SK-N-SH (cell line): ENCODE measurements at regions of chr2 and their contacts with region 1.

Region 1: DNA sequence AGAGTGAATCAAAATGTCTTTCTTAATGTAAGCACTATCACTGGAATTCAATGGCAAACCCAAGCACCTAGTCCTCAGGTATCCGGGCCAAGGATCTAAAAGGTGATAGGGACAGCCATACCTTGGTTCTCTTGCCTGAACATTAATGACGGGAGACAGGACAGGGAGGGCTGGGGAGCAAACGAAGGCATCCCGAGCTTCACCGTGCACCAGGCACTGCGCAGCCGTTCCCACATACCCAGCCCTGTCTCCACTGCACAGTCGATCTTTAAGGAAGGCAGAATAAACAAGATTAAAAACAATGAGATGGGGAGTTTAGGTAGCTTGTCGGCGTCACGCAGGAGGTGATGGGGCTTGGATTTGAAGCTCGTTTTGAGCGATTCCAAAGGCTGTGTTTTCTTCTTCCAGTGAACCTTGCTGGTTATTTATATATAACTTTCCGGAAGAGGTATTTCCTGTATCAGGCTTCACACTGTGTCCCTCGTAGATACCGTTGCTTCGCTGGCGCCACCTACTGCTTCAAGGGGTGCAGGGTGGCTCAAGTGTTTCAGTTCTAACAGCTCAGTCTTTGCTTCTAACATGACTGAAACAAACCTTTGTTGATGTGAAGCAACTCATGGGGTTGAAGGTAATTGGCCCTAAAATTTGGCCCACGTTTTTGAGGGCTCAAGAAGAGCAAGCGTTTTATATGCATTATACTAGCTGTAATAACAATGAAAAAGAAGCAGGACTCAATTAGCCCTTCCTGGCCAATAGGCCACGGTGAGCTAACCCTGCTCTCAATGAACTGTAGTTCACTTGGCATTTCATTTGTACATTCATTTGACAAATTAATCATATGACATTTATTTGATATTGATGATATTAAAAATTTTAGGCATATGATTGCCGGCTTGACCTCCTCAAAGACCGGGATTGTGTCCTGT is 77.4 kb downstream of the DCDC2C start:
- DNase-seq: peak; percentile 87
- H3K4me3 ChIP-seq: peak overlapping the region in 1 of 2 experiments; percentile 46; a peak in 2 of 4 replicates
- H3K27ac ChIP-seq: no peak overlapping the region
- H3K4me1 ChIP-seq: peaks cover 0 to 3% of the 10 kb centered on the region in 2 experiments; a peak in 2 of 4 replicates
- H3K27me3 ChIP-seq: no peaks in the 10 kb centered on the region
- CTCF ChIP-seq: peak; percentile 39
- EP300 ChIP-seq: no peak
- RAD21 ChIP-seq: peak; percentile 74

Region 2: DNA sequence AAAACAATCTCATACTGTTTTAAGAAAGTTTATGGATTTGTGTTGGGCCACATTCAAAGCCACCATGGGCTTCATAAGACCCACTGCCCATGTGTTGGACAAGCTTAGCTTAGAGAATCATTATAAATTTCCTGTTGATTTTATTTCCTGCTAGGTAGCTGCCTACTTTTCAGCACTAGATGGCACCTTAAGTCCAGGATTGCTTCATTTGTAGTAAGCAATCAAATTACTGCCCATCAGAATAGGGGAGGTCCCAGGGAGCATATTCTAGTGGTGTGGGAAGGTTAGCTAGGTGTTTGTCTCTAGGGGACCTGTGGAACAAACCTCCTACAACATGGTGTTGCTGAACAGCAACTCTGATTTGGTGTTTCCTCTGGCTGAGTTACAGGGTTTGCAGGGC is 88.4 kb before region 1 on chr2:
- CTCF ChIA-PET with region 1: interaction called, 24 read pairs
- POLR2A ChIA-PET with region 1: no interaction called
- DNase-seq: peak; percentile 68
- H3K4me3 ChIP-seq: no peak overlapping the region
- H3K27ac ChIP-seq: no peak overlapping the region
- H3K4me1 ChIP-seq: no peaks in the 10 kb centered on the region
- H3K27me3 ChIP-seq: no peaks in the 10 kb centered on the region
- CTCF ChIP-seq: peak; percentile 45
- EP300 ChIP-seq: no peak
- RAD21 ChIP-seq: peak; percentile 78

Region 3: GRCh38 chr2:3756306-3756705 is 24.4 kb before region 1 on chr2:
- CTCF ChIA-PET with region 1: interaction called, 31 read pairs
- POLR2A ChIA-PET with region 1: no interaction called
- DNase-seq: no peak
- H3K4me3 ChIP-seq: no peak overlapping the region
- H3K27ac ChIP-seq: no peak overlapping the region
- H3K4me1 ChIP-seq: no peaks in the 10 kb centered on the region
- H3K27me3 ChIP-seq: no peaks in the 10 kb centered on the region
- CTCF ChIP-seq: no peak
- EP300 ChIP-seq: no peak
- RAD21 ChIP-seq: no peak

Region 4: GRCh38 chr2:3762771-3763447 is 17.8 kb before region 1 on chr2:
- CTCF ChIA-PET with region 1: interaction called, 51 read pairs
- POLR2A ChIA-PET with region 1: no interaction called
- DNase-seq: no peak
- H3K4me3 ChIP-seq: no peak overlapping the region
- H3K27ac ChIP-seq: no peak overlapping the region
- H3K4me1 ChIP-seq: no peaks in the 10 kb centered on the region
- H3K27me3 ChIP-seq: no peaks in the 10 kb centered on the region
- CTCF ChIP-seq: no peak
- EP300 ChIP-seq: no peak
- RAD21 ChIP-seq: no peak

Region 5: GRCh38 chr2:3768960-3769765 is 11.6 kb before region 1 on chr2:
- CTCF ChIA-PET with region 1: interaction called, 51 read pairs
- POLR2A ChIA-PET with region 1: no interaction called
- DNase-seq: no peak
- H3K4me3 ChIP-seq: no peak overlapping the region
- H3K27ac ChIP-seq: no peak overlapping the region
- H3K4me1 ChIP-seq: no peaks in the 10 kb centered on the region
- H3K27me3 ChIP-seq: no peaks in the 10 kb centered on the region
- CTCF ChIP-seq: no peak
- EP300 ChIP-seq: no peak
- RAD21 ChIP-seq: no peak

Region 6: GRCh38 chr2:3805201-3805939 is 24.6 kb after region 1 on chr2:
- CTCF ChIA-PET with region 1: interaction called, 19 read pairs
- POLR2A ChIA-PET with region 1: no interaction called
- DNase-seq: peak; percentile 75
- H3K4me3 ChIP-seq: peak overlapping the region in 1 of 2 experiments; percentile 4; a peak in 1 of 4 replicates
- H3K27ac ChIP-seq: no peak overlapping the region
- H3K4me1 ChIP-seq: no peaks in the 10 kb centered on the region; a peak in 1 of 4 replicates
- H3K27me3 ChIP-seq: no peaks in the 10 kb centered on the region
- CTCF ChIP-seq: peak; percentile 14; the same call in 1 of the 2 replicates
- EP300 ChIP-seq: no peak
- RAD21 ChIP-seq: peak; percentile 56